ENCODE measurements at regions of chr12 and their contacts with region 1.

Region 1: DNA sequence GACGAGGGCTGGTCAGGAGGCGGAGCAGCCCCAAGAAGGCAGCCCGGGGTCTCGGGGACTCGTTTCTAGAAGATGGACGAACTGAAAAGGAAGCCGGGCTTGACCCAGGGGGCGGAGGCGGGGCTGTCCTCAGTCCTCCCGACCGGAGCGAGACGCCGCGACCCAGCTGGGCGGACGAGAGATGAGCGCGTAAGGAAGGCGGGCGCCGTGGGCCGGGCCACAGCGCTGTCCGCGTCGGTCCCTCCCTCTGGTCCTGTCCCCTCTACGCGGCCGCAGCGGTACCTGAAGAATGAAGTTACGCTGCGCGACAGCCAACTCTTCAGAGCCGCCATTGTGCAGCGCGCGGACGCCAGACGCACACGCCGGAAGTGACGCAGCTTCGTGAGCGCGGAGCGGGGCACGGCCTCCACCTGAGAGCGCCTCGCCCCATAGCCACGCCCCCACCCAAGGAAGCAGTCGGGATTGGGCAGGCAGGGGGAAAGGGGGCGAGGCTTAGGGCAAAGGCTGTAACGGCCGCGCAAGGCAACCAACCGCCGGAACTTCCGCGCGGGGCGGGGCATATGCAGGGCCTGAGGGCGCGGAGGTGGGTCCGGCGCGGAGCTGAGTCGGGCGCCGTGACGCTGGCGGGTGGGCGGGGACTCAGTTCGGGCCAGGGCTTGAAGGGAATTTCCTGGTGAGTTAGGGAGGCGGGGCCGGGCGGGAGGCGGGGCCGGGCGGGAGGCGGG is at the start of gene DIABLO:
- DNase-seq: peak; percentile 99 to 100 (median 100)
- ATAC-seq: peak; percentile 91
- H3K4me3 ChIP-seq: peak within 1 kb of the TSS; percentile 79 to 91
- H3K4me3 Mint-ChIP-seq: peak within 1 kb of the TSS; percentile 86
- H3K27ac ChIP-seq: peak within 1 kb of the TSS; percentile 97 to 98
- H3K27ac Mint-ChIP-seq: peak within 1 kb of the TSS; percentile 92
- H3K4me1 ChIP-seq: peaks cover 41% of the 10 kb centered on the region
- H3K4me1 Mint-ChIP-seq: peaks cover 52% of the 10 kb centered on the region
- H3K27me3 ChIP-seq: no peaks in the 10 kb centered on the region
- H3K27me3 Mint-ChIP-seq: no peaks in the 10 kb centered on the region
- CTCF ChIP-seq: no peak
- total RNA-seq, gene DIABLO: 104 to 112 TPM

Region 2: GRCh38 chr12:121399391-121400331 is 826.2 kb before region 1 on chr12 and contains the start of gene RNF34:
- CTCF ChIA-PET with region 1: no interaction called
- POLR2A ChIA-PET with region 1: no interaction called
- intact Hi-C with region 1: loop called in 1 of 2 experiments (anchors 5 kb)
- DNase-seq: peak; percentile 95 to 99 (median 97)
- ATAC-seq: peak; percentile 87
- H3K4me3 ChIP-seq: peak within 1 kb of the TSS; percentile 78 to 89
- H3K4me3 Mint-ChIP-seq: peak within 1 kb of the TSS; percentile 86
- H3K27ac ChIP-seq: peak within 1 kb of the TSS; percentile 78 to 90
- H3K27ac Mint-ChIP-seq: peak within 1 kb of the TSS; percentile 97
- H3K4me1 ChIP-seq: peaks cover 28% of the 10 kb centered on the region
- H3K4me1 Mint-ChIP-seq: peaks cover 33% of the 10 kb centered on the region
- H3K27me3 ChIP-seq: no peaks in the 10 kb centered on the region
- H3K27me3 Mint-ChIP-seq: no peaks in the 10 kb centered on the region
- CTCF ChIP-seq: no peak
- total RNA-seq, gene RNF34: 46.8 to 51.3 TPM

Region 3: GRCh38 chr12:122078141-122079032 is 147.5 kb before region 1 on chr12 and contains the start of gene MLXIP:
- CTCF ChIA-PET with region 1: no interaction called
- POLR2A ChIA-PET with region 1: no interaction called
- intact Hi-C with region 1: loop called in 1 of 2 experiments (anchors 1 kb)
- DNase-seq: peak; percentile 68 to 94 (median 90)
- ATAC-seq: peak; percentile 72
- H3K4me3 ChIP-seq: peak within 1 kb of the TSS; percentile 68 to 91
- H3K4me3 Mint-ChIP-seq: peak within 1 kb of the TSS; percentile 91
- H3K27ac ChIP-seq: peak within 1 kb of the TSS; percentile 53 to 82
- H3K27ac Mint-ChIP-seq: peak within 1 kb of the TSS; percentile 91
- H3K4me1 ChIP-seq: peaks cover 32% of the 10 kb centered on the region
- H3K4me1 Mint-ChIP-seq: peaks cover 43% of the 10 kb centered on the region
- H3K27me3 ChIP-seq: no peaks in the 10 kb centered on the region
- H3K27me3 Mint-ChIP-seq: no peaks in the 10 kb centered on the region
- CTCF ChIP-seq: no peak
- total RNA-seq, gene MLXIP: 117 to 132 TPM

Region 4: GRCh38 chr12:122244565-122245371 is 18.9 kb after region 1 on chr12:
- CTCF ChIA-PET with region 1: interaction called, 16 read pairs
- POLR2A ChIA-PET with region 1: interaction called, 42 read pairs
- intact Hi-C with region 1: loop called (anchors 2 kb)
- DNase-seq: peak in 5 of 9 experiments; percentile 6 to 67 (median 43)
- ATAC-seq: peak; percentile 74
- H3K4me3 ChIP-seq: peak overlapping the region; percentile 26 to 44
- H3K4me3 Mint-ChIP-seq: peak overlapping the region; percentile 74
- H3K27ac ChIP-seq: peak overlapping the region; percentile 34 to 67
- H3K27ac Mint-ChIP-seq: peak overlapping the region; percentile 91
- H3K4me1 ChIP-seq: peaks cover 19% of the 10 kb centered on the region
- H3K4me1 Mint-ChIP-seq: peaks cover 26% of the 10 kb centered on the region
- H3K27me3 ChIP-seq: no peaks in the 10 kb centered on the region
- H3K27me3 Mint-ChIP-seq: no peaks in the 10 kb centered on the region
- CTCF ChIP-seq: no peak

Region 5: DNA sequence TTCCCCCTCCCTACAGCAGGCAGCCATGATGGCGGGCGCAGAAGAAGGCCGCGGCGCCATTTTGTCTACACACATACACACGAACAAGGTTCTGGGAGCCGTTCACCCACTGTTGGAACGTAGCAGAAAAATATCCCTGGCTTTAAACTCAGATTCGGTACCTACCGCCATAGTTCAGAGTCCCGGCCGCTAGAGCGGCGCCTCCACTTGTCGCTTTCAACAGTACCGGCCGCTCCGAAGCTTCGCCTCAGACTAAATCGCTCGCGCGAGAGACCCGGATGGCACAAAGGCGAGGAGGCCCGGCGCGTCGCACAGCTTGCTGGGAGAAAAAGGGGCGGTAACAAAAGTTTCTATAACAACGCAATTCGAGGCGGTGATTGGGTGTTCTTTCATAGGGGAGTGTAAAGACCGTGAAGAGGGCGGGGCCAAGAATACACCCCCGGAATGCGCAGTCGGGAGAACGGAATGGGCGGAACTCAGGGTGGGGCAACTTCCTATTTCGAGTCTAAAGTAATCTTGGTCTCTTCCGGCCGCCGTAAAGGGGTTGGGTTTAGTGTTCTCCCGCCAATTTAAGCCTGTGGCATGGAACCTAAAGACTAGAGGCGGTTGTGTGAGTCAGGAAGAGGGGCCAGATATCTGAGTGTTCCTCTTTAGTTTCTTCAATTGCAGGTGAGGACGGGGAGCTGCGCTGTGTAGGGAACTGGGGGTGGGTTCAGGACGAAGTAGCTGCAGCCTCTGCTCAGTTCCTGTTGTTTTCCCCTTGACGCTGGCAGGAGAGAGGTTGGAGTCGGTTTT is 301.0 kb after region 1 on chr12 and contains the starts of genes KNTC1 and RSRC2:
- CTCF ChIA-PET with region 1: no interaction called
- POLR2A ChIA-PET with region 1: interaction called, 8 read pairs
- intact Hi-C with region 1: loop called (anchors 1 to 10 kb)
- DNase-seq: peak; percentile 94 to 100 (median 96)
- ATAC-seq: peak; percentile 94
- H3K4me3 ChIP-seq: peak within 1 kb of the TSS; percentile 70 to 72
- H3K4me3 Mint-ChIP-seq: no peak within 1 kb of the TSS
- H3K27ac ChIP-seq: peak within 1 kb of the TSS; percentile 96 to 99
- H3K27ac Mint-ChIP-seq: peak within 1 kb of the TSS; percentile 15
- H3K4me1 ChIP-seq: peaks cover 35% of the 10 kb centered on the region
- H3K4me1 Mint-ChIP-seq: peaks cover 34% of the 10 kb centered on the region
- H3K27me3 ChIP-seq: no peaks in the 10 kb centered on the region
- H3K27me3 Mint-ChIP-seq: no peaks in the 10 kb centered on the region
- CTCF ChIP-seq: no peak
- total RNA-seq, gene KNTC1: 14.1 to 15.1 TPM
- total RNA-seq, gene RSRC2: 325 to 333 TPM

Region 6: DNA sequence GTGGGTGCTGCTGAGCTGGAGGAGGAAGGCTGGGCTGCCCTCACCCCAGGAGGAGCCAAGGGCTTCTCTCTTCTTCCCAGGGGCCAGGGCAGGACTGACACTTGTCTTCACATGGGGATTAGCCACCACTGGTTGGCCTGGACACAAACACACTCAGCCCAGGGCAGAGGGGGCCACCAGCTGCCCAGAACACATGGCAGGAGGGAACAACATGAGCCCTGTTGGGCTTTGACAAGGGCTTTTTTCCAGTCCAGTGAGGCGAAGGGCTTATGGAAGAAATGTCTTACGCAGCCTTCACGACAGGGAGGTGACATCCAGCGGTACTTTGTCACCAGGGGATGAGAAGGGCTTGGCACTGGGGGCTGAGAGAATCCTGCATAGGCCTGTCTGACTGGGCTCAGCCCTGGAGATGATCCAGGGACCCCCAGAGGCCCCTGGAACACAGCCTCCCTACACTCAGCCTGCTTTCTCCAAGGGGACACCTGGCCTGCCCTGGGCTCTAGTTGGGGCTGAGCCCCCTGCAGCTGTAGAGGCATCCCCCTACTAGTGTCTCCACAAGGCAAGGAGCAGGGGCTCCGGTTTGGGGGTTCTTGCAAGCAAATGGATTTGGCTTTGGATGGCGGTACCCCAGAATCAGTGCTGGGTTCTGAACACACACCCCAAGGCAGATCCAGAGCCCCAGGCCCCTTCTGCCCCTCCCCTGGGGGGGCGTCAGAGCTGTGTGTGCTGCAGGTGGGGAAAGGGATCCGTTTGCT is 773.5 kb after region 1 on chr12:
- CTCF ChIA-PET with region 1: no interaction called
- POLR2A ChIA-PET with region 1: no interaction called
- intact Hi-C with region 1: no loop called
- DNase-seq: no peak
- ATAC-seq: no peak
- H3K4me3 ChIP-seq: no peak overlapping the region
- H3K4me3 Mint-ChIP-seq: no peak overlapping the region
- H3K27ac ChIP-seq: no peak overlapping the region
- H3K27ac Mint-ChIP-seq: no peak overlapping the region
- H3K4me1 ChIP-seq: no peaks in the 10 kb centered on the region
- H3K4me1 Mint-ChIP-seq: no peaks in the 10 kb centered on the region
- H3K27me3 ChIP-seq: no peaks in the 10 kb centered on the region
- H3K27me3 Mint-ChIP-seq: no peaks in the 10 kb centered on the region
- CTCF ChIP-seq: no peak

Region 7: GRCh38 chr12:123365025-123365917 is 1139.4 kb after region 1 on chr12:
- CTCF ChIA-PET with region 1: no interaction called
- POLR2A ChIA-PET with region 1: no interaction called
- intact Hi-C with region 1: loop called in 1 of 2 experiments (anchors 5 kb)
- DNase-seq: peak; percentile 95 to 100 (median 97)
- ATAC-seq: peak; percentile 74
- H3K4me3 ChIP-seq: peak overlapping the region; percentile 69 to 79
- H3K4me3 Mint-ChIP-seq: peak overlapping the region; percentile 90
- H3K27ac ChIP-seq: peak overlapping the region; percentile 87 to 93
- H3K27ac Mint-ChIP-seq: peak overlapping the region; percentile 92
- H3K4me1 ChIP-seq: peaks cover 18% of the 10 kb centered on the region
- H3K4me1 Mint-ChIP-seq: peaks cover 24% of the 10 kb centered on the region
- H3K27me3 ChIP-seq: no peaks in the 10 kb centered on the region
- H3K27me3 Mint-ChIP-seq: no peaks in the 10 kb centered on the region
- CTCF ChIP-seq: peak; percentile 93

Measured in CD8-positive, alpha-beta T cell (primary cell).